Posterior cingulate gyrus (tissue), 11 donors: ENCODE measurements at regions of chr20 and their contacts with region 1.

Region 1: DNA sequence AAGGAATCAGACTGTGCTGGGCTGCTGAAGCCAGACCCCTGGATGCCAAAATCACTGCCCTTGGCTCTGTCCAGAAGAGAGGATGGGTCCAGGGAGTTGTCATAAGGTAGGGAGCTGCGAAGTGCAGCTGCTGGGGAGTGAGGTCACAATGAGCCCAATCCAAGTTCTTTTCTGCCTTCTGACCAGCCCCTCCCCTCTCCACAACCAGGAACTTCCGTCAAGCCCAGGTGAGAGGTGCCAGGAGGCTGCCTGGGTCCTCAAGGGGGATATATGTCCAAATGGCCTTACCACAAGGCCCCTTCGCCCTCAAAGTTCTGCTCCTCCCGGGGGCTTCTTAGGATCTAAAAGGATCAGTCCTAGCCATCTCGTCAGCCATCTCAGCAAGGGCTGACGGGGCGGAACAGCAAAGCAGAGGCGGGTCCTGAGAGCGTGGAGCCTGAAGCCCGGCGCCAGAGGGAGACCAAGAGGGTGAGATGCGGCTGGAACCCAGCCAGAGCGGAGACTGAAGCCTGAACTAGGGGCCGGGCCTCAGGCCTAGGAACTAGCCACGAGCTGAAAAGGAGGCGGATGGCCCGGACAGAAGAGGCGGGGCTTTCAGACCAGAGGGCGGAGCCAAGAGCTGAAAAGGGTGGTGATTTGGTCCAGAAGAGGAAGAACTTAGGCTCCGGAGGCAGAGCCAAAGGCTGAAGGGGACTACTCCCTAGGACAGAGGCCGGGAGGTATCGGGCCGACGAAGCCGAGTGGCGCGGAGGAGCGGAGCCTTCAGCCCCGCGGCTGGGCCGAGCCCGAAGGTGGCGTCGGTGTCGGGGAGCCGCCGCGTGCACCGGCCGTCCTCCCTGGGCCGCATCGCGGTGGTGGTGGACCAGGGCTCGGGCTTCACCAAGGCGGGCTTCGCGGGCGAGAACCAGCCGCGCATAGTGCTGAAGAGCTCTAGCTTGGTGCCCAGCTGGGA is at the start of gene ACTL10:
- DNase-seq: peak; percentile 85 to 98 (median 91)

Region 2: DNA sequence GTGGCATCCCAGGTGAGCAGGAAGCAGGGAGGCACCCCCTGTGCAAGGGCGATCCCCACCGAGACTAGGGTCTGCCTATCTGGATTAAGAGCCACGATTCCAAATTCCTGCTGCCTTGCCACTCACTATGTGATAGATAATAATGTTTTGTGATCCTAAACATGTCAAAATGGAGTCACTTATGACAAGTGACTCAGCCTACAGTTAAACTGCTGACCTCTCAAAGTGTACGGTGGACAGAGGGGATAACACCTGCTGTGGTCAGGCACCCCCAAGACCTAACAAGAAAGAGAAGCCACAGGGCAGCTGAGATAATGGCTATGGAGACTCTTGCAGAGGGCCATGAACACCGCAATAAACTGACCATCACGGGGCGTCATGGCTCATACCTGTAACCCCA is 207.0 kb before region 1 on chr20:
- intact Hi-C with region 1: loop called (anchors 5 kb)
- DNase-seq: peak in 1 of 10 donors; percentile 15

Region 3: GRCh38 chr20:33489495-33490022 is 177.0 kb before region 1 on chr20:
- intact Hi-C with region 1: no loop called
- DNase-seq: peak; percentile 99 to 100 (median 100)

Region 4: DNA sequence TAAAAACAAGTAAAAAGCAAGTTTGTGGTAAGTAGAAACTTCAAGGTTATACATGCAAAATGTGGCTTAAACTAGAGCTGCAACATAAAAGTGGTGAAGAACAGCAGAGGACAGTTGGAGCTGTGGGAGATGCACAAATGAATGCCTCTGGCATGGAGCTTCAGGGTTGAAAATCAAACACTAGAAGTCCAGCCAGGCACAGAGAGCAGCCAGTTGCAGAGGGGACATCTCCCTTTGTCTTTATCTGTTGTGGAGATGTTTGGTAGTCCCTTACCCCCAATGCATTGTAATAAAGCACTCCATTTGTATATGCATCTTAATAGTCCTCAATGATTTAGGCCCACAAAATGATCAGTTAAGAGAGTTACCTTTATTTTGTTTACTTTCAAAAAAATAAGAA is 77.5 kb before region 1 on chr20:
- intact Hi-C with region 1: no loop called
- DNase-seq: peak in 1 of 10 donors; percentile 27